Dendritic cell treated with granulocyte-macrophage colony-stimulating factor and Interleukin-4, amounts not matched to agents 40 ng/mL and 50 ng/mL, for 4 days (primary cell): ENCODE measurements at regions of chr19 and their contacts with region 1.

Region 1: DNA sequence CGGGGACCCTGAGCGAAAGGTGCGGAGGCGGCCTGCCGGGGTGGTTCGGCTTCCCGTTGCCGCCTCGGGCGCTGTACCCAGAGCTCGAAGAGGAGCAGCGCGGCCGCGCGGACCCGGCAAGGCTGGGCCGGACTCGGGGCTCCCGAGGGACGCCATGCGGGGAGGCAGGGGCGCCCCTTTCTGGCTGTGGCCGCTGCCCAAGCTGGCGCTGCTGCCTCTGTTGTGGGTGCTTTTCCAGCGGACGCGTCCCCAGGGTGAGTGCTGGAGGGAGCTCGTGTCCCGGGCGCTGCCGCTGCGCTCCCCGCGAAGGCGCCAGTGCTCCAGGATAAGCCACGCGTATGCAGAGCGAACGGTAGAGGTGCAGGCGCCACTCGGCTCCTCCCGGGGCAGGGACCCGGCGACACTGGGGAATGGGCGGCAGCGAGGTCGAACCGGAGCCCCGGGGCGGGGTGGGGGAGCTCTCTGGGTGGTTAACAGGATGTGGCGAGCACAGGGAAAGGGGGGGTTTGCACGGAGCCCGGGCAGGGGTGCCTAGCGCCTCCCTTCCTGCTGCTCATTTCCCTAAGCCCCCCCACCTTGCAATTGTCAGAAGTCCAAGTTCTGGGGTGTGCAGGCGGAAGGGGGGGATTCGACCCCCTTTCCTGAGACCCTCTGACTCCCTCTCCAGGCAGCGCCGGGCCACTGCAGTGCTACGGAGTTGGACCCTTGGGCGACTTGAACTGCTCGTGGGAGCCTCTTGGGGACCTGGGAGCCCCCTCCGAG is at the start of gene IL27RA:
- H3K4me3 Mint-ChIP-seq: peak within 1 kb of the TSS; percentile 90
- H3K27ac Mint-ChIP-seq: peak within 1 kb of the TSS; percentile 91
- H3K4me1 Mint-ChIP-seq: peaks cover 50% of the 10 kb centered on the region
- H3K27me3 Mint-ChIP-seq: no peaks in the 10 kb centered on the region

Region 2: GRCh38 chr19:13952154-13953035 is 79.5 kb before region 1 on chr19 and contains the start of gene DCAF15:
- intact Hi-C with region 1: loop called (anchors 5 kb)
- H3K4me3 Mint-ChIP-seq: peak within 1 kb of the TSS; percentile 94
- H3K27ac Mint-ChIP-seq: peak within 1 kb of the TSS; percentile 90
- H3K4me1 Mint-ChIP-seq: peaks cover 27% of the 10 kb centered on the region
- H3K27me3 Mint-ChIP-seq: peaks cover 2% of the 10 kb centered on the region

Region 3: DNA sequence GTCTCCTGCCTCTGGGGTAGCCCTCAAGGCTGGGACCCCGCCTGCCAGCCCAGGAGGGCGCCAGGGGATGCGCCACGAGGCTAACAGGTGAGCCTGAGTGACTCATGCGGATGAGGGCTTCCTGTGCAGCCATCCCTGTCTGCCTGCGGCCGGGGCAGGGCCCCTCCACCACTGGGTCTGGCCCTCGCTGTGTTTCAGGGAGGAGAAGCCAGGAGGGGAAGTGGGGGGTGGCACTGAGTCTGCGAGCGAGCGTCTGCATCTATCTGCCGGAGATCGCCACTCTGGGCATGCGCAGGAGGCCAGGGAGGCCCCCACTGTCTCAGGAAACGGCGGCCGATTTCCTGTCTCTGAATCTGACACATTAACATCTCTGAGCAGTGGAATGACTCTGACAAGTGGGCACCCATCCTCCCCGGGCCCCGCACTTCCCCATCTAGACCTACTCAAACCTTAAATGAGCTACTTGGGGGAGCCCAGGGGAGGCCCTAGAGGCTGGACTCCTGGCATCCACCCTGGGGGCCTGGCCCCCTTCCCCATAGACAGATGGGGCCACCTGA is 45.5 kb before region 1 on chr19:
- intact Hi-C with region 1: loop called (anchors 5 kb)
- H3K4me3 Mint-ChIP-seq: peak overlapping the region; percentile 73
- H3K27ac Mint-ChIP-seq: peak overlapping the region; percentile 100
- H3K4me1 Mint-ChIP-seq: peaks cover 76% of the 10 kb centered on the region
- H3K27me3 Mint-ChIP-seq: no peaks in the 10 kb centered on the region

Region 4: GRCh38 chr19:14059093-14059480 is 27.2 kb after region 1 on chr19:
- intact Hi-C with region 1: no loop called
- H3K4me3 Mint-ChIP-seq: no peak overlapping the region
- H3K27ac Mint-ChIP-seq: no peak overlapping the region
- H3K4me1 Mint-ChIP-seq: peaks cover 25% of the 10 kb centered on the region
- H3K27me3 Mint-ChIP-seq: peaks cover 71% of the 10 kb centered on the region